CD8-positive, alpha-beta memory T cell (primary cell): ENCODE measurements at regions of chr14 and their contacts with region 1.

Region 1: GRCh38 chr14:72893636-72894321 is at the start of gene DPF3:
- DNase-seq: peak; percentile 88 to 92 (median 89)
- H3K4me3 ChIP-seq: peak within 1 kb of the TSS; percentile 85
- H3K4me3 Mint-ChIP-seq: peak within 1 kb of the TSS; percentile 94 to 99 (median 97)
- H3K27ac ChIP-seq: peak within 1 kb of the TSS; percentile 16
- H3K27ac Mint-ChIP-seq: peak within 1 kb of the TSS; percentile 23 to 90 (median 78)
- H3K4me1 ChIP-seq: peaks cover 26% of the 10 kb centered on the region
- H3K4me1 Mint-ChIP-seq: peaks cover 28 to 31% (median 29%) of the 10 kb centered on the region in 3 donors
- H3K27me3 ChIP-seq: peaks cover 34% of the 10 kb centered on the region
- H3K27me3 Mint-ChIP-seq: peaks cover 35 to 64% of the 10 kb centered on the region in 2 donors
- total RNA-seq, gene DPF3: 0.50 to 0.62 TPM

Region 2: GRCh38 chr14:72904840-72905561 is 11.2 kb after region 1 on chr14:
- CTCF ChIA-PET with region 1: interaction called, 11 read pairs
- POLR2A ChIA-PET with region 1: no interaction called
- DNase-seq: peak; percentile 44 to 74 (median 54)
- H3K4me3 ChIP-seq: no peak overlapping the region
- H3K4me3 Mint-ChIP-seq: no peak overlapping the region
- H3K27ac ChIP-seq: no peak overlapping the region
- H3K27ac Mint-ChIP-seq: peak overlapping the region in 1 of 8 donors; percentile 49
- H3K4me1 ChIP-seq: no peaks in the 10 kb centered on the region
- H3K4me1 Mint-ChIP-seq: peaks cover 0 to 4% (median 0%) of the 10 kb centered on the region in 3 donors
- H3K27me3 ChIP-seq: no peaks in the 10 kb centered on the region
- H3K27me3 Mint-ChIP-seq: peaks cover 5 to 28% of the 10 kb centered on the region in 2 donors